ENCODE measurements at regions of chr11 and their contacts with region 1.

Region 1: GRCh38 chr11:67439321-67439883 is 1.9 kb upstream of the PTPRCAP start:
- DNase-seq: peak in 5 of 14 experiments; percentile 23 to 64 (median 48)
- ATAC-seq: no peak
- H3K4me3 ChIP-seq: peak overlapping the region; percentile 97
- H3K4me3 Mint-ChIP-seq: peak overlapping the region; percentile 98
- H3K27ac ChIP-seq: peak overlapping the region; percentile 72 to 94
- H3K27ac Mint-ChIP-seq: peak overlapping the region; percentile 98
- H3K4me1 ChIP-seq: peaks cover 79% of the 10 kb centered on the region
- H3K4me1 Mint-ChIP-seq: peaks cover 63% of the 10 kb centered on the region
- H3K27me3 ChIP-seq: no peaks in the 10 kb centered on the region
- H3K27me3 Mint-ChIP-seq: no peaks in the 10 kb centered on the region
- CTCF ChIP-seq: no peak

Region 2: DNA sequence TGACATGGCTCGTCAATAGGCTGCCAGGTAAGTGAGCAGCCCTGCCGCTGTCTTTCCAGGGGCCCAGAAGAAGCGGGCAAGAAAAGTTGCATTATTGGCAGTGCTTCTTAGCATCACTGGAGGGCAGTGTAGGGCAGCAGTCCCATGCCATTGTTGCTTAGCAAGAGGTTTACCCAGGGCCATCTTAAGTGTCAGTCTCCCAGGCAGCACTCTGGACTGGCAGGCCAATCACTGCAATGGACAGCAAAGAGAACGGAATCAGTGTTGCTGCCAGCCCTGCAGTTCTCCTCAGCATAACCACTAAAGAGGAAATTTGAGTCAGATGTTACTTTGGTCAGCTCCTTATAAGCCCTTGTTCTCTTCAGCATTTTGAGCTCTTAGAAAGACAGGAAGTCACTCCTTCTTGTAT is 186.6 kb before region 1 on chr11:
- CTCF ChIA-PET with region 1: no interaction called
- POLR2A ChIA-PET with region 1: no interaction called
- intact Hi-C with region 1: no loop called
- DNase-seq: peak in 5 of 14 experiments; percentile 26 to 74 (median 53)
- ATAC-seq: peak; percentile 67
- H3K4me3 ChIP-seq: no peak overlapping the region
- H3K4me3 Mint-ChIP-seq: no peak overlapping the region
- H3K27ac ChIP-seq: no peak overlapping the region
- H3K27ac Mint-ChIP-seq: peak overlapping the region; percentile 57
- H3K4me1 ChIP-seq: peaks cover 27% of the 10 kb centered on the region
- H3K4me1 Mint-ChIP-seq: peaks cover 54% of the 10 kb centered on the region
- H3K27me3 ChIP-seq: no peaks in the 10 kb centered on the region
- H3K27me3 Mint-ChIP-seq: no peaks in the 10 kb centered on the region
- CTCF ChIP-seq: peak; percentile 34

Region 3: GRCh38 chr11:67277231-67277961 is 162.0 kb before region 1 on chr11:
- CTCF ChIA-PET with region 1: no interaction called
- POLR2A ChIA-PET with region 1: interaction called, 11 read pairs
- intact Hi-C with region 1: no loop called
- DNase-seq: peak; percentile 81 to 98 (median 93)
- ATAC-seq: peak; percentile 93
- H3K4me3 ChIP-seq: peak overlapping the region; percentile 43
- H3K4me3 Mint-ChIP-seq: peak overlapping the region; percentile 91
- H3K27ac ChIP-seq: peak overlapping the region; percentile 76 to 97
- H3K27ac Mint-ChIP-seq: peak overlapping the region; percentile 90
- H3K4me1 ChIP-seq: peaks cover 100% of the 10 kb centered on the region
- H3K4me1 Mint-ChIP-seq: peaks cover 64% of the 10 kb centered on the region
- H3K27me3 ChIP-seq: no peaks in the 10 kb centered on the region
- H3K27me3 Mint-ChIP-seq: no peaks in the 10 kb centered on the region
- CTCF ChIP-seq: no peak

Region 4: GRCh38 chr11:67401495-67402191 is 37.8 kb before region 1 on chr11 and contains the start of gene PPP1CA:
- CTCF ChIA-PET with region 1: interaction called, 21 read pairs
- POLR2A ChIA-PET with region 1: interaction called, 353 read pairs
- intact Hi-C with region 1: loop called in 1 of 2 experiments (anchors 1 kb)
- DNase-seq: peak; percentile 83 to 96 (median 92)
- ATAC-seq: peak; percentile 69
- H3K4me3 ChIP-seq: peak within 1 kb of the TSS; percentile 98
- H3K4me3 Mint-ChIP-seq: peak within 1 kb of the TSS; percentile 100
- H3K27ac ChIP-seq: peak within 1 kb of the TSS; percentile 62 to 84
- H3K27ac Mint-ChIP-seq: peak within 1 kb of the TSS; percentile 98
- H3K4me1 ChIP-seq: peaks cover 86% of the 10 kb centered on the region
- H3K4me1 Mint-ChIP-seq: peaks cover 56% of the 10 kb centered on the region
- H3K27me3 ChIP-seq: peaks cover 0 to 3% of the 10 kb centered on the region in 2 experiments
- H3K27me3 Mint-ChIP-seq: no peaks in the 10 kb centered on the region
- CTCF ChIP-seq: no peak
- total RNA-seq, gene PPP1CA: 42.0 to 45.5 TPM

Region 5: GRCh38 chr11:67420646-67421420 is 18.6 kb before region 1 on chr11:
- CTCF ChIA-PET with region 1: interaction called, 4 read pairs
- POLR2A ChIA-PET with region 1: interaction called, 411 read pairs
- intact Hi-C with region 1: loop called in 1 of 2 experiments (anchors 1 kb)
- DNase-seq: peak; percentile 97 to 100 (median 99)
- ATAC-seq: peak; percentile 79
- H3K4me3 ChIP-seq: peak overlapping the region; percentile 50
- H3K4me3 Mint-ChIP-seq: peak overlapping the region; percentile 86
- H3K27ac ChIP-seq: peak overlapping the region; percentile 15 to 79
- H3K27ac Mint-ChIP-seq: peak overlapping the region; percentile 94
- H3K4me1 ChIP-seq: peaks cover 57% of the 10 kb centered on the region
- H3K4me1 Mint-ChIP-seq: peaks cover 56% of the 10 kb centered on the region
- H3K27me3 ChIP-seq: no peaks in the 10 kb centered on the region
- H3K27me3 Mint-ChIP-seq: no peaks in the 10 kb centered on the region
- CTCF ChIP-seq: no peak

Region 6: GRCh38 chr11:67452141-67452952 is 12.9 kb after region 1 on chr11 and contains the start of gene GPR152:
- CTCF ChIA-PET with region 1: no interaction called
- POLR2A ChIA-PET with region 1: interaction called, 110 read pairs
- intact Hi-C with region 1: no loop called
- DNase-seq: peak in 1 of 14 experiments; percentile 12
- ATAC-seq: no peak
- H3K4me3 ChIP-seq: no peak within 1 kb of the TSS
- H3K4me3 Mint-ChIP-seq: no peak within 1 kb of the TSS
- H3K27ac ChIP-seq: no peak within 1 kb of the TSS
- H3K27ac Mint-ChIP-seq: no peak within 1 kb of the TSS
- H3K4me1 ChIP-seq: peaks cover 48% of the 10 kb centered on the region
- H3K4me1 Mint-ChIP-seq: peaks cover 24% of the 10 kb centered on the region
- H3K27me3 ChIP-seq: no peaks in the 10 kb centered on the region
- H3K27me3 Mint-ChIP-seq: no peaks in the 10 kb centered on the region
- CTCF ChIP-seq: no peak
- total RNA-seq, gene GPR152: not detected

Region 7: GRCh38 chr11:67482825-67483798 is 43.7 kb after region 1 on chr11 and contains the start of gene AIP:
- CTCF ChIA-PET with region 1: no interaction called
- POLR2A ChIA-PET with region 1: interaction called, 87 read pairs
- intact Hi-C with region 1: loop called in 1 of 2 experiments (anchors 1 kb)
- DNase-seq: peak; percentile 94 to 99 (median 97)
- ATAC-seq: peak; percentile 77
- H3K4me3 ChIP-seq: peak within 1 kb of the TSS; percentile 80
- H3K4me3 Mint-ChIP-seq: peak within 1 kb of the TSS; percentile 91
- H3K27ac ChIP-seq: peak within 1 kb of the TSS; percentile 90
- H3K27ac Mint-ChIP-seq: peak within 1 kb of the TSS; percentile 95
- H3K4me1 ChIP-seq: peaks cover 63% of the 10 kb centered on the region
- H3K4me1 Mint-ChIP-seq: peaks cover 56% of the 10 kb centered on the region
- H3K27me3 ChIP-seq: no peaks in the 10 kb centered on the region
- H3K27me3 Mint-ChIP-seq: no peaks in the 10 kb centered on the region
- CTCF ChIP-seq: peak; percentile 37
- total RNA-seq, gene AIP: 115 to 117 TPM

Region 8: GRCh38 chr11:67507864-67508485 is 68.6 kb after region 1 on chr11 and contains the start of gene CDK2AP2:
- CTCF ChIA-PET with region 1: no interaction called
- POLR2A ChIA-PET with region 1: interaction called, 24 read pairs
- intact Hi-C with region 1: loop called (anchors 2 kb)
- DNase-seq: peak; percentile 91 to 99 (median 97)
- ATAC-seq: peak; percentile 71
- H3K4me3 ChIP-seq: peak within 1 kb of the TSS; percentile 76
- H3K4me3 Mint-ChIP-seq: peak within 1 kb of the TSS; percentile 93
- H3K27ac ChIP-seq: peak within 1 kb of the TSS; percentile 87 to 97
- H3K27ac Mint-ChIP-seq: peak within 1 kb of the TSS; percentile 98
- H3K4me1 ChIP-seq: peaks cover 50% of the 10 kb centered on the region
- H3K4me1 Mint-ChIP-seq: peaks cover 44% of the 10 kb centered on the region
- H3K27me3 ChIP-seq: peaks cover 0 to 9% of the 10 kb centered on the region in 2 experiments
- H3K27me3 Mint-ChIP-seq: no peaks in the 10 kb centered on the region
- CTCF ChIP-seq: no peak
- total RNA-seq, gene CDK2AP2: 19.5 to 22.0 TPM

Measured in CD4-positive, alpha-beta T cell (primary cell).